ENCODE measurements at regions of chr19 and their contacts with region 1.

Region 1: GRCh38 chr19:17755977-17756670 is 4.8 kb downstream of the FCHO1 start:
- DNase-seq: peak; percentile 37
- ATAC-seq: peak; percentile 45
- H3K4me3 ChIP-seq: peak overlapping the region; percentile 69
- H3K27ac ChIP-seq: peak overlapping the region; percentile 66
- H3K4me1 ChIP-seq: peaks cover 61% of the 10 kb centered on the region
- H3K27me3 ChIP-seq: no peaks in the 10 kb centered on the region
- CTCF ChIP-seq: no peak
- EP300 ChIP-seq: no peak
- POLR2A ChIP-seq: no peak
- RAD21 ChIP-seq: no peak

Region 2: DNA sequence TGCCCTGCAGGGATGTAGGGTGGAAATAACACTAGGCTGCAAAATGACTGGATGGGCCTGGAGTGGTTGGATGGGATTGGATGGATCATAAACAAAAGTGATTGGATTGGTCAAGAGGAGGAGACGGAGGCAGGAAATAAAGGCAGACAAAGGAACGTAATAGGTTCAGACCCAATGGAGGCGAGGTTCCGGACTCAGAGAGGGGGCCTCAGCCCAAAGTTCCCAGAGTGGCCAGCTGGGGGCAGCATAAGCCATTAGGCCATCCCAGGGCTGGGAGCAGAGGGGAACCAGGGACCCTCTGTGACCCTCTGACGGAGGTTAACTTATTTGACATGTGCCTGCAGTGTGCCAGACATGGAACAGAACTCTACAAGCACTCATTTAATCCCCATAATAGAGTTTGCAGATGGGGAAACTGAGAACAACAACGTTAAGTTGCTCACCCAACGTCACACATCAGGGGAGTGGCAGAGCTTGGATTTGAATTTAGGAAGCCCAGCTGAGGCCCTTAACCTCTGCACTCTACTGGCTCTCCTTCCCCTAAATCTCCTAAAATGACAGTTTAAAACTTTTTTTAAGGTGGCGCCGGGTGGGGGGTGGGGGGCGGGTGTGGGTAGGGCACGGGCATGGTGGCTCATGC is 52.2 kb before region 1 on chr19:
- CTCF ChIA-PET with region 1: interaction called, 108 read pairs
- POLR2A ChIA-PET with region 1: no interaction called
- RAD21 ChIA-PET with region 1: interaction called, 23 read pairs
- SMC1A ChIA-PET with region 1: interaction called, 49 read pairs
- in situ Hi-C with region 1: no loop called
- intact Hi-C with region 1: no loop called
- DNase-seq: no peak
- ATAC-seq: peak; percentile 93
- H3K4me3 ChIP-seq: no peak overlapping the region
- H3K27ac ChIP-seq: no peak overlapping the region
- H3K4me1 ChIP-seq: no peaks in the 10 kb centered on the region
- H3K27me3 ChIP-seq: no peaks in the 10 kb centered on the region; a peak in 1 of 4 replicates
- CTCF ChIP-seq: peak; percentile 82 to 93 (median 88)
- EP300 ChIP-seq: no peak
- POLR2A ChIP-seq: no peak
- RAD21 ChIP-seq: peak; percentile 80

Region 3: DNA sequence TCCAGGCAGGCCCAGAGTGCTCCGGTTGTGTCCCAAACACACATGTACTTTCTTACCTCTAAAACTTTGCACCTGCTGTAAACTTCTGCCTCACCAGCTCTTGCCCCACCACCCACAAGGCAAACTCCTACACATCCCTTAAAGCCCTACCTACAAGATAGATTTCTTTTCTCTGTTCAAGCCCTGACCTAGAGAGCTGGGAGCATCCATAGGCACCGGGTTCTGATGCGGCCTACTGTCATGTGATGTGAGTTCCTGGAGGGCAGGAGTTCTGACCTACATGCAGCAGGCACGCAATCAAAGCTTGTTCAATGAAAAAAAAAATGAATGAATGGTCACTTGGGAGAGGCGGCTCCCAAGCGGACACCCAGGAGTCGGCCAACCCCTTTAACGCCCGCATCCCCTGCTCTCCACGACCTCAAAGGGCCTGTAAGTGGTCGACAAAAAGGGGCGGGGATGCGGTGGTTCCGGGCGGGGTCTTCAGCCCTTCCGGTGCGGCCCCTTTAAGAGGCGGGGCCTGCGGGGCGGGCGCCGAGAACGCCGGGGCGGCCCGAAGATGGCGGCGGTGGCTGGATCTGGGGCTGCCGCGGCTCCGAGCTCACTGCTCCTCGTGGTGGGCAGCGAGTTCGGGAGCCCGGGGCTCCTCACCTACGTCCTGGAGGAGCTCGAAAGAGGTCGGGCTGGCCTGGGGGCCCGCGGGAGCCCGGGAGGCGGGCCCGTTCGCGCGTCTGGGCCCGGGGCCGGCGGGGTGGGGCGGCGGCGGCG is 37.0 kb before region 1 on chr19 and contains the start of gene MAP1S:
- CTCF ChIA-PET with region 1: interaction called, 22 read pairs
- POLR2A ChIA-PET with region 1: interaction called, 21 read pairs
- RAD21 ChIA-PET with region 1: interaction called, 21 read pairs
- SMC1A ChIA-PET with region 1: interaction called, 91 read pairs
- in situ Hi-C with region 1: no loop called
- intact Hi-C with region 1: loop called (anchors 5 kb)
- DNase-seq: no peak
- ATAC-seq: peak; percentile 90
- H3K4me3 ChIP-seq: peak within 1 kb of the TSS; percentile 99
- H3K27ac ChIP-seq: peak within 1 kb of the TSS; percentile 38; the same call in 1 of the 2 replicates
- H3K4me1 ChIP-seq: peaks cover 27% of the 10 kb centered on the region
- H3K27me3 ChIP-seq: no peaks in the 10 kb centered on the region
- CTCF ChIP-seq: no peak
- EP300 ChIP-seq: no peak
- POLR2A ChIP-seq: peak; percentile 91
- RAD21 ChIP-seq: no peak
- polyA plus RNA-seq, gene MAP1S: 2.1 to 3.4 TPM

Region 4: GRCh38 chr19:17725422-17726078 is 30.6 kb before region 1 on chr19:
- CTCF ChIA-PET with region 1: interaction called, 22 read pairs
- POLR2A ChIA-PET with region 1: interaction called, 21 read pairs
- RAD21 ChIA-PET with region 1: interaction called, 11 read pairs
- SMC1A ChIA-PET with region 1: interaction called, 91 read pairs
- in situ Hi-C with region 1: no loop called
- intact Hi-C with region 1: no loop called
- DNase-seq: no peak
- ATAC-seq: peak; percentile 30; the same call in 1 of the 3 replicates
- H3K4me3 ChIP-seq: no peak overlapping the region
- H3K27ac ChIP-seq: no peak overlapping the region
- H3K4me1 ChIP-seq: peaks cover 16% of the 10 kb centered on the region
- H3K27me3 ChIP-seq: no peaks in the 10 kb centered on the region
- CTCF ChIP-seq: peak; percentile 32 to 59 (median 46); a peak in 5 of 6 replicates
- EP300 ChIP-seq: no peak
- POLR2A ChIP-seq: no peak; the same call in none of the 2 replicates
- RAD21 ChIP-seq: peak; percentile 64

Region 5: DNA sequence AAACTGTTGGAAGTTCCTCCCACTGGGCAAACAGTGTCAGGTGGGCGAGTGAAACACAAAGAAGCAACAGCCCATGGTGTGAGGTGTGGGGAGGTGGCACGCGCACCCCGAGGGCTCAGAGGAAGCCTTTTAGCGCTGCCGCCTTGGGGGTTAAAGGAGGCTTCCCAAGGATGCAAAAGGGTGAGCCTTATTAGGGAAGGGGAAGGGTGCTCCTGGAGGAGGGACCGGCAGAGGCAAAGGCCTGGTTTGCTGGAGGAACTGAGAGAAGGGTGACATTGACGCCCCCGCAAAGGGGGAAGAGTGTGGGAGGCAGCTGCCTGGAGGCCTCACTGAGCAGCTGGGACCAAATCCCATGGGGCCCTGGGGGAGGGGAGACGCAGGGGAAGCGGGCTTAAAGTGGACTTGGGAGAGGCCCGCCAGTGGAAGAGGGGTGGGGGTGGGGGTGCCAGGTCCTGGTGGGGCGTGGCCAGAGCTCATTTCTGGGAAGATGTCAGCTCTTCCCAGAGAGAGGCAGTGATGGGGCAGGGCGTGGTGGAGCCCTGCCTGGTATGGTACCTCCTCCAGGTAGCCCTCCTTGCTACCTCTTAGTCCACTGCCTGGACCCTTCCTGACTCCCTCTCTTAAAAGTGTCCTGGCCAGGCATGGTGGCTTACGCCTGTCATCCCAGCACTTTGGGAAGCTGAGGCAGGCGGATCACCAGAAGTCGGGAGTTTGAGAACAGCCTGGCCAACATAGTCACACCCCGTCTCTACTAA is 16.8 kb before region 1 on chr19:
- CTCF ChIA-PET with region 1: interaction called, 20 read pairs
- POLR2A ChIA-PET with region 1: interaction called, 22 read pairs
- RAD21 ChIA-PET with region 1: interaction called, 76 read pairs
- SMC1A ChIA-PET with region 1: interaction called, 93 read pairs
- in situ Hi-C with region 1: no loop called
- intact Hi-C with region 1: no loop called
- DNase-seq: peak; percentile 40
- ATAC-seq: peak; percentile 83
- H3K4me3 ChIP-seq: no peak overlapping the region
- H3K27ac ChIP-seq: peak overlapping the region; percentile 45; the same call in 1 of the 2 replicates
- H3K4me1 ChIP-seq: peaks cover 16% of the 10 kb centered on the region
- H3K27me3 ChIP-seq: no peaks in the 10 kb centered on the region
- CTCF ChIP-seq: no peak
- EP300 ChIP-seq: peak in 1 of 2 experiments; percentile 74; a peak in 1 of 4 replicates
- POLR2A ChIP-seq: no peak
- RAD21 ChIP-seq: no peak

Region 6: DNA sequence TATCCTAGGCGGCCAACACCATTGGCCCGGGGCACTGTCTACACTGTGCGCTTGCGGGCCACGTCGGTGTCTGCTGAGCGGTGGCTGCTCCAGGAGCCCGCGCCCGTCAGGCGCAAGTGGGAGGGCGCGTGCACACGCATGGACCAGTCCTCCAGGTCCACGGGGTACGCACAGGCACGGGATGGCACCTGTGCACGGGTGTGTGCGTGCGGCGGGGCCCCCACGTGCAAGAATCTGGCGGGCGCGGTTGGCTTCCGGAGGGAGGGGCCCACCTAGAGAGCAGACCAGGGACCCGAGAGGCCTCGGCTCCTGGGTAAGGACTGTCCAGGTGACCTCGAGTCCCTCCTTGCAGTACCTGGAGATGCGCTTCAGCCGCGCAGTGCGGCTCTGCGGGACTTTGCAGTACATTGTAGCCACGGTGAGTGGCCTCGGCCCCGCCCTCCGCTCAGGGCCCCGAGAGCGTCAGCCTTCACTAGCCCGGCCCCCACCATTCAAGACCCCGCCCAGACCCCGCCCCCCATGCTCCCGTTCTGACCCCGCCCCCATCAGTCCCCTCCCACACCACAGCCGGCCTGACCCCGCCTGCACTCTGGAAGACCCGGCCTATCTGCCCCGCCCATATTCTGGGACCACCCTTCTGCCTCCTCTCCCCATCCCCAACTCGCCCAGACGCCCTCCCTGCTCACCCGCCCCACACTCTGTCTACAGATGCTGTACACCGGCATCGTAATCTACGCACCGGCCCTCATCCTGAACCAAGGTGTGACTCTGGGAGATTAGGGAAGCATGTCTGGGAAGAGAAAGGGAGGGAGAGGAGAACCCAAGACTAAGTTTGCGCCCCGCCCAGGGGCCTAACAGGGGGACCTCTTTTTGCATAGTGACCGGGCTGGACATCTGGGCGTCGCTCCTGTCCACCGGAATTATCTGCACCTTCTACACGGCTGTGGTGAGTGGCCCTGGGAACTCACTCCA is 117.9 kb after region 1 on chr19:
- CTCF ChIA-PET with region 1: no interaction called
- POLR2A ChIA-PET with region 1: no interaction called
- RAD21 ChIA-PET with region 1: no interaction called
- SMC1A ChIA-PET with region 1: no interaction called
- in situ Hi-C with region 1: no loop called
- intact Hi-C with region 1: no loop called
- DNase-seq: no peak
- ATAC-seq: peak; percentile 90
- H3K4me3 ChIP-seq: peak overlapping the region; percentile 1; the same call in 1 of the 2 replicates
- H3K27ac ChIP-seq: no peak overlapping the region
- H3K4me1 ChIP-seq: peaks cover 3% of the 10 kb centered on the region; the same call in 1 of the 2 replicates
- H3K27me3 ChIP-seq: peaks cover 3 to 4% of the 10 kb centered on the region in 2 experiments; a peak in 3 of 4 replicates
- CTCF ChIP-seq: no peak
- EP300 ChIP-seq: no peak
- POLR2A ChIP-seq: no peak
- RAD21 ChIP-seq: no peak

Measured in GM12878 (cell line).